Mammary epithelial cell (primary cell): ENCODE measurements at regions of chr17 and their contacts with region 1.

Region 1: GRCh38 chr17:41060052-41060604 is at the start of gene KRTAP2-3:
- DNase-seq: peak; percentile 97
- H3K4me3 ChIP-seq: no peak within 1 kb of the TSS
- H3K27ac ChIP-seq: peak within 1 kb of the TSS; percentile 60
- H3K4me1 ChIP-seq: peaks cover 33% of the 10 kb centered on the region
- H3K27me3 ChIP-seq: no peaks in the 10 kb centered on the region
- CTCF ChIP-seq: no peak
- total RNA-seq, gene KRTAP2-3: 4.8 to 27.5 TPM

Region 2: DNA sequence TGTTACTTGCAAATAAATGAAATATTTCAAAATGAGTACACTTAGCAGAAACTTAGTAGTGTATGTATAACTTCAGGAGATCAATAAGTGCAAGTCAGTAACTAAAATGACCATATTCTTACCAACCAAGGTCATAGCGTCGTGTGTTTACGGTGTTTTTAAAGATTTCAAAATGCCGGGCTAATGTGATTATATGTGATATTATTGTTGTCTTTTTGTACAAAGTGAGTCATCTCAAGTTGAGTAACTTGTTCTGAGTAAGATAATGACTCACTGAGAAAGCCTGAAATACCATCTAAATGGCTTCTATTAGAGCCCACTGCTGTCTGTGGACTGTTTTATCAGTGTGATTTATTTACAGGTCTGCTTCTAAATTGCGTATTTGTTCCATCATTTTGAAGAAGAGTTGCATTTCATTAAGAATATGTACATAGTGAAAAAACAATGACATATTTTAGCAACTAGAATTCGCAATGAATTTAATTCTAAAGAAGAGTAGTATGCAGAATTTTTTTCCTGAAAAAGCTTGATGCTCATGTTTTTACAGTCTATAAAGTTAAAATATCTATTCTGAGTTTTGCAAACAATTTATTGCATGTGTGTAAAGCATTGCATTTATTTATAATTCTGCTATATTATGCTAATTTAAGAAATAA is 205.8 kb before region 1 on chr17:
- CTCF ChIA-PET with region 1: no interaction called
- dilution Hi-C with region 1: no loop called
- in situ Hi-C with region 1: no loop called
- intact Hi-C with region 1: loop called (anchors 1 kb)
- DNase-seq: peak; percentile 84
- H3K4me3 ChIP-seq: no peak overlapping the region
- H3K27ac ChIP-seq: no peak overlapping the region
- H3K4me1 ChIP-seq: peaks cover 20% of the 10 kb centered on the region
- H3K27me3 ChIP-seq: no peaks in the 10 kb centered on the region
- CTCF ChIP-seq: no peak

Region 3: GRCh38 chr17:40864661-40865390 is 195.3 kb before region 1 on chr17:
- CTCF ChIA-PET with region 1: no interaction called
- dilution Hi-C with region 1: no loop called
- in situ Hi-C with region 1: no loop called
- intact Hi-C with region 1: no loop called
- DNase-seq: no peak
- H3K4me3 ChIP-seq: no peak overlapping the region
- H3K27ac ChIP-seq: no peak overlapping the region
- H3K4me1 ChIP-seq: no peaks in the 10 kb centered on the region
- H3K27me3 ChIP-seq: no peaks in the 10 kb centered on the region
- CTCF ChIP-seq: no peak

Region 4: DNA sequence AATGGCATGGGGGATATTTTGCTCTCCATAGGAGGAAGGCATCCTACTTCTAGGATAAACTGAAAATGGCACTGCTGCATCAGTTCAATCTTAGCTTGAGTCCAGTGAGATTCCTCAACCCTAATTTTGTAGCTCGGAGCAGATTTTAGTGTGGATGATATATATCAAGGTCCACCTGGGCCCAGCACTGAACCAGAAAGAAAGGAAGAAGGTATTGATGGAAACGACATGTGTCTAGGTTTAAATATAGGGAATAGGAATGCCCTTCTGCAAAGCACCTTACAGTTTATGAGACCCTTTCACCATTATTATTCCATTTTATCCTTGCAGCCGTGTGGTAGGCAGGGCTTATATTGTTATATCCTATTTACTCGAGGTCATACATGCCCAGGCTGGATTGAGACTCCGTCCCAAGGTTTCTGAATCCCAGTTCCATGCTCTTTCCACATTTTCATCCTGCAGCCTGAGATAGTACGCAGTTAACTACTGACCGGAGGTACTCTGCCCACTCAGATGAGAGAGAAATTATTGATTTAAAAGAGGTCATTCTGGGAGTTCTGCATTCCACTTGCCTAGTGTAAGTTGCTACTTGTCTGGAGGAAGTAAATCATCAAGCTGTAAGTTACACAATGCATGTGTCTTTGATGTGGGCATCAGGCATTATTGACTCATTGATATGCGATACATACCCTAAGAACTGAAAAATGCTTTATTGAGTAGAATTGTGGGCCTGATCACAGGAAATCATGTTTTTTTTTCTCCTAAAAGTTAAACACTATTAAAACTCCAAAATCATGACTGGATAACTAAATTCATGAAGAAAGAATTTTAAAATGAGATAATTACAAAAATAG is 103.5 kb before region 1 on chr17:
- CTCF ChIA-PET with region 1: no interaction called
- dilution Hi-C with region 1: no loop called
- in situ Hi-C with region 1: no loop called
- intact Hi-C with region 1: loop called (anchors 1 kb)
- DNase-seq: peak; percentile 99
- H3K4me3 ChIP-seq: no peak overlapping the region
- H3K27ac ChIP-seq: peak overlapping the region; percentile 99
- H3K4me1 ChIP-seq: peaks cover 75% of the 10 kb centered on the region
- H3K27me3 ChIP-seq: no peaks in the 10 kb centered on the region
- CTCF ChIP-seq: no peak

Region 5: GRCh38 chr17:40967581-40967980 is 92.5 kb before region 1 on chr17:
- CTCF ChIA-PET with region 1: no interaction called
- dilution Hi-C with region 1: no loop called
- in situ Hi-C with region 1: no loop called
- intact Hi-C with region 1: no loop called
- DNase-seq: no peak
- H3K4me3 ChIP-seq: no peak overlapping the region
- H3K27ac ChIP-seq: no peak overlapping the region
- H3K4me1 ChIP-seq: no peaks in the 10 kb centered on the region
- H3K27me3 ChIP-seq: no peaks in the 10 kb centered on the region
- CTCF ChIP-seq: no peak

Region 6: DNA sequence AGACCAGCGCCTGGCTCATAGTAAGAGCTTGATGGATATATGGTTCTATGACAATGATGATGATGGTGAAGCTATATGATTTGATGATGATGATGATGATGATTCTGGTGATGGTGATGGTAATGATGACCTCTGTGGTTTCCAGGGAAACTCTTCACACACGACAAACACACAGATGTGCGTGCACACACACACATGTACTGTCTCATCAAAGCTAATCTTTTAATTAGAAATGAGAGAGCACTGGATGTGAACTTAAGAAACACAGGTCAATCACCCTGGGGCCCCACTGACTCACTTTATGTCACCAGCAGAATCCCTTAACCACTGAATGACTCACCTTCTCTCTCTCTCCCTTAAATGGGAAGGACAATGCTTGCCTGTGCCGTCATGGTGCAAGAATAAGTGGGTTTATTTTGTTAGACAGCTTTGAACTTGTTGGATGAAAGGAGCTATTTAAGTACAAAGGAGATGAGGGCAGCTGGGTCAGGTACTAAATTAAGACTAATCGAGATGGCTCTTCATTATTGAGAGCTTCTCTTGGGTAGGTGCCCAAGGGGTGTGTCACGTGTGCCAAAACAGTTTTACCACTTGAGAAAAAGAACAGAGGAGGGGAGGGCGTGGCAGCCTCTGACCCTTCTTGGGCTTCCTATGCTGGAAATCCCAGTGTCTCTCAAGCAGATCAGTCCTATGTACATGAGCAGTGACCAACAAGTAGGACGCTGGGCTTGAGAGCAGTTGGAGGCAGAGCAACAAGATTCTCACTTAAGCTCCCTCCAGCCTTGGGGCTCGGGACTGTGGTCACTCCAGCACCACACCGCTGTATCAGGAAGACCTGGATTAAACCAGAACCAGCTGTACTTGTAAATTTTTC is 343.9 kb after region 1 on chr17:
- CTCF ChIA-PET with region 1: no interaction called
- dilution Hi-C with region 1: no loop called
- in situ Hi-C with region 1: no loop called
- intact Hi-C with region 1: loop called (anchors 10 kb)
- DNase-seq: peak; percentile 100
- H3K4me3 ChIP-seq: no peak overlapping the region
- H3K27ac ChIP-seq: peak overlapping the region; percentile 94
- H3K4me1 ChIP-seq: peaks cover 32% of the 10 kb centered on the region
- H3K27me3 ChIP-seq: no peaks in the 10 kb centered on the region
- CTCF ChIP-seq: no peak